ENCODE measurements at regions of chr1 and their contacts with region 1.

Region 1: DNA sequence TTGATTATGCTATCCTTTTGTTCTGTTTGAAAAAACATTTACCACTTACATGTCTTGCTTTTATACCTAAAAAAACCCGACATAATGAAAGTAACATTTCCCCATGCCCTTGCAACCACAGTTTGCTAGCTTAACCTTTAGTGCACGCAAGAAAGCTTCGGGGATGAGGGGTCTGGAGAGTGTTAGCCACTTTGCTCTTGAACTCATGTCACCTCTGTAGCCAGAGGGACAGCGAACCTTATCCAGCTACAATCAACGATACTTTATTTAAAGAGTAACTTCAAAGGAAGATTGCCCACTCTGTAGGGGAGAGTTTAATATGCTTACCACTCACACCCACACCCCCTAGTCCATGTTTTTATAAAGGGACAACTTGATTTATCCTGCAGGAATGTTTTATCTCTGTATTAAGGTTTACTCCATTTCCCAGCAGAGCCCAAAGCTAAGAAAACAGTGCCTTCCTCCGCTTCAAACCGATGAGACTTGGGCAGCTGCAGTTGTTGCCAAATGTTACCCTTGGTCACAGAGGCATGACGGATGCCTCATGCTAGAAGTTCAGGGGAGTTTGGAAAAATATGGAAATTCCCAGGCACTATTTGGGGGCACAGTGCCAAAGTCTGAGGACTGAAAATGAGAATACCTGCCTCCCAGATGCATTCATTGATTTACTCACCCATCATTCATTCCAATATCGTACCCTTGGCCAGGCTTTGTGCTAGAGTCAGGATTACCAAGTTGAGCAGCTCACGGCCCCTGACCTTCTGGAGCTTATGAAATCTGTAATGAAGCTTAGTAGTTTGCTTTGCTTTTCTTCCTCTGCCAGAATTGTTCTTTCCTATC is 61.4 kb upstream of the VCAM1 start:
- DNase-seq: no peak
- H3K4me3 ChIP-seq: no peak overlapping the region
- CTCF ChIP-seq: no peak

Region 2: GRCh38 chr1:100710906-100711682 is 53.0 kb after region 1 on chr1:
- in situ Hi-C with region 1: loop called (anchors 5 kb)
- DNase-seq: no peak
- H3K4me3 ChIP-seq: no peak overlapping the region
- CTCF ChIP-seq: no peak